Esophagus muscularis mucosa (tissue), 4 donors: ENCODE measurements at regions of chr1 and their contacts with region 1.

Region 1: DNA sequence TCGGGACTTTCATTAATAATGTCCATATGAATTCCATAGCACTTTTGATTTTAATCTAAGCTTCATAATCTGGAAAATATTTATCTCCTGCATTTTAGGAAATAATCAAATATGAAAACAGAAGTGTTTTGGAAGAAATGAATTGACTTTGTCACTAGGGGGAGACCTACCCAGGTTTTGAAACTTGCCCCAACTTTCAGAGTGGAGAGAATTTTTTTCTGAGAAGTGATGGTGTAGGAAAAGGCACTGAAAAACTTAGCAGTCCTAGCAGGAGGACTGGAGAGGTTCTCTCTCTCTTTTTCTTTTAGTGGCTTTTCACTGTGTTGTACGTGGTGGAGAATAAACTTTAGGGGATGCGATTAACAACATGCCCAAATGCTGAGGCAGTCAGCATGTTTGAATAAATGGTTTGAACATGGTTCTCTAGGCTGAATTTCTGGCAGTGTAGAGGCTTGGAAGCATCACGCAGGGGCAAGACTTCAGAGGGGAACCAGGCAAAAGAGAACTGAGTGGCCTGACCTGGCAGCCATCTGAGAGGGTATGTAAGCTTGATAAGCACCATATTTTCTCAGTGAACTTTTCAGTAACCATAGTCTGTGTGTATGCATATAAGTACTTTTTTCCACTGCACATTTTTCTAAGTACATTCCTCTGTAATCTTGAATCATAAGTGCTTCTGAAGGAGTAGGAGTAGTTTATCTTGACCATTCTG is 68.3 kb upstream of the NEK7 start:
- DNase-seq: no peak
- H3K4me3 ChIP-seq: no peak overlapping the region
- H3K27ac ChIP-seq: no peak overlapping the region
- H3K4me1 ChIP-seq: no peaks in the 10 kb centered on the region
- H3K27me3 ChIP-seq: no peaks in the 10 kb centered on the region
- CTCF ChIP-seq: peak; percentile 46 to 56 (median 56)
- EP300 ChIP-seq: no peak
- POLR2A ChIP-seq: no peak

Region 2: GRCh38 chr1:197955486-197956394 is 132.8 kb before region 1 on chr1:
- intact Hi-C with region 1: no loop called
- DNase-seq: no peak
- H3K4me3 ChIP-seq: no peak overlapping the region
- H3K27ac ChIP-seq: no peak overlapping the region
- H3K4me1 ChIP-seq: peaks cover 0 to 5% (median 0%) of the 10 kb centered on the region in 4 donors
- H3K27me3 ChIP-seq: no peaks in the 10 kb centered on the region
- CTCF ChIP-seq: no peak
- EP300 ChIP-seq: no peak
- POLR2A ChIP-seq: no peak

Region 3: DNA sequence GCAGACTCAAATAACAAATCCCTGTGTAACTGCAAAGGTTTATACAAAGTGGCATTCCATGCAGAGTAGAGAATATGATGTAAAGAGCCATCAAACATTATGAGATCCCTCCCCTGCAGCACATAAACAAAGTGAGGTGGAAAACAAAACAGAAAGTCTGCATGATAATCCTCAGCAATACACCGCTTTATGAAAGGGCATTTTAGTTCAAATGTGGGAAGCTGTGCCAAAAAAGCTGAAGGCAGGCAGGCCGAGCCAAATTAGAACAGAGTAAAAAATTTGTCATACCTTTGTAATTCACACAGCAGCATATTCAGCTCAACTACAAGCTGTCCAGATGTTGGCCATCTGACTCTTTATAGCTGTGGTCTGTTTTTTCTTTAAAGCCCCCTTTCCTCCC is 57.8 kb before region 1 on chr1:
- intact Hi-C with region 1: no loop called
- DNase-seq: no peak
- H3K4me3 ChIP-seq: no peak overlapping the region
- H3K27ac ChIP-seq: no peak overlapping the region
- H3K4me1 ChIP-seq: peaks cover 0 to 5% (median 0%) of the 10 kb centered on the region in 4 donors
- H3K27me3 ChIP-seq: no peaks in the 10 kb centered on the region
- CTCF ChIP-seq: no peak
- EP300 ChIP-seq: no peak
- POLR2A ChIP-seq: no peak

Region 4: DNA sequence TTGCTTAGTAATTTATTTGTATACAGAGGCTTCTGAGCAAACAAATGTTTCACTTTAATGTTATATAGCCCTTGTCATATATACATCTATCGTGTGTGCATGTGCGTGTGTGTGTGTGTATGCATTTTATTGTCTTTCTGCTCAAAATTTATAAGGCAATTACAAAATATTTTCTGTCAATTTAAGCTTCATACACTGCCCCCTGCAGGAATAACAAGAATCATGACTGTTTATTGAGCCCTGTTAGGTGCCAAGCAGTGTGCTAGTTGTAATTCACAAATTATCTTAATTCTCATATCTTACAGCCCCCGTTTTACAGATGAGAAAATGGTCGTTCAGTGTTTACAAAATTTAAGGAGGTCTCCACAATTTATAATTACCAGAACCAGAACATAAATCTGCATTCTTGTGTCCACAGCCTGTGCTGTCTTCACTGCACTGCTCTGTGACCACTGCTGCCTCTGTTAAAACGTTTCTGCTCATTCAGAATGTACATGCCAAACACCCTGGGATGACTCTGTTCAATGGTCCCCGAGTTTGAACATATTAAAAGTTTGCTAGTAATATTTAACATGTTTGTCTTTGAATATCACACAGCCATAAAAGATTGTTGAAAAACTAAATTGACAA is 270.6 kb after region 1 on chr1:
- intact Hi-C with region 1: loop called (anchors 5 kb)
- DNase-seq: no peak
- H3K4me3 ChIP-seq: no peak overlapping the region
- H3K27ac ChIP-seq: no peak overlapping the region
- H3K4me1 ChIP-seq: no peaks in the 10 kb centered on the region
- H3K27me3 ChIP-seq: no peaks in the 10 kb centered on the region
- CTCF ChIP-seq: peak; percentile 26 to 44 (median 31)
- EP300 ChIP-seq: no peak
- POLR2A ChIP-seq: no peak

Region 5: GRCh38 chr1:198465201-198466144 is 377.0 kb after region 1 on chr1:
- intact Hi-C with region 1: loop called (anchors 5 kb)
- DNase-seq: no peak
- H3K4me3 ChIP-seq: no peak overlapping the region
- H3K27ac ChIP-seq: no peak overlapping the region
- H3K4me1 ChIP-seq: no peaks in the 10 kb centered on the region
- H3K27me3 ChIP-seq: no peaks in the 10 kb centered on the region
- CTCF ChIP-seq: peak; percentile 47 to 61 (median 49)
- EP300 ChIP-seq: no peak
- POLR2A ChIP-seq: no peak